Esophagus squamous epithelium (tissue), 5 donors: ENCODE measurements at regions of chr17 and their contacts with region 1.

Region 1: GRCh38 chr17:56592487-56593085 is 913 bp upstream of the NOG start:
- DNase-seq: no peak
- H3K4me3 ChIP-seq: peak overlapping the region; percentile 31 to 63 (median 54)
- H3K27ac ChIP-seq: no peak overlapping the region
- H3K4me1 ChIP-seq: peaks cover 32 to 55% (median 42%) of the 10 kb centered on the region in 3 donors
- H3K27me3 ChIP-seq: peaks cover 5 to 95% (median 15%) of the 10 kb centered on the region in 4 donors
- CTCF ChIP-seq: peak; percentile 76 to 94 (median 90)
- POLR2A ChIP-seq: no peak

Region 2: GRCh38 chr17:56549501-56549900 is 43.1 kb before region 1 on chr17:
- intact Hi-C with region 1: no loop called
- DNase-seq: no peak
- H3K4me3 ChIP-seq: no peak overlapping the region
- H3K27ac ChIP-seq: no peak overlapping the region
- H3K4me1 ChIP-seq: no peaks in the 10 kb centered on the region
- H3K27me3 ChIP-seq: peaks cover 0 to 4% (median 0%) of the 10 kb centered on the region in 4 donors
- CTCF ChIP-seq: no peak
- POLR2A ChIP-seq: no peak

Region 3: GRCh38 chr17:56715613-56716357 is 123.2 kb after region 1 on chr17:
- intact Hi-C with region 1: loop called (anchors 5 kb)
- DNase-seq: peak; percentile 15
- H3K4me3 ChIP-seq: no peak overlapping the region
- H3K27ac ChIP-seq: no peak overlapping the region
- H3K4me1 ChIP-seq: no peaks in the 10 kb centered on the region
- H3K27me3 ChIP-seq: peaks cover 0 to 8% (median 0%) of the 10 kb centered on the region in 4 donors
- CTCF ChIP-seq: peak; percentile 59 to 83 (median 80)
- POLR2A ChIP-seq: no peak

Region 4: GRCh38 chr17:56779898-56780733 is 187.5 kb after region 1 on chr17:
- intact Hi-C with region 1: loop called (anchors 5 kb)
- DNase-seq: no peak
- H3K4me3 ChIP-seq: peak overlapping the region in 3 of 4 donors; percentile 28 to 55 (median 38)
- H3K27ac ChIP-seq: no peak overlapping the region
- H3K4me1 ChIP-seq: peaks cover 4 to 18% (median 8%) of the 10 kb centered on the region in 3 donors
- H3K27me3 ChIP-seq: peaks cover 0 to 44% (median 0%) of the 10 kb centered on the region in 4 donors
- CTCF ChIP-seq: peak; percentile 91 to 98 (median 96)
- POLR2A ChIP-seq: no peak